HepG2 (cell line): ENCODE measurements at regions of chr12 and their contacts with region 1.

Region 1: GRCh38 chr12:98424726-98425401 is 90.5 kb upstream of the TMPO start:
- DNase-seq: peak; percentile 46
- ATAC-seq: peak; percentile 86
- H3K4me3 ChIP-seq: peak overlapping the region in 1 of 3 experiments; percentile 6; a peak in 1 of 6 replicates
- H3K27ac ChIP-seq: no peak overlapping the region
- H3K4me1 ChIP-seq: peaks cover 18% of the 10 kb centered on the region; the same call in 1 of the 2 replicates
- H3K27me3 ChIP-seq: 0 out of 5 replicates have a peak, but pooled peaks cover 0 to 1% of the 10 kb centered on the region in 2 experiments
- CTCF ChIP-seq: peak; percentile 74
- EP300 ChIP-seq: no peak
- POLR2A ChIP-seq: no peak
- RAD21 ChIP-seq: peak; percentile 29; the same call in 1 of the 2 replicates

Region 2: DNA sequence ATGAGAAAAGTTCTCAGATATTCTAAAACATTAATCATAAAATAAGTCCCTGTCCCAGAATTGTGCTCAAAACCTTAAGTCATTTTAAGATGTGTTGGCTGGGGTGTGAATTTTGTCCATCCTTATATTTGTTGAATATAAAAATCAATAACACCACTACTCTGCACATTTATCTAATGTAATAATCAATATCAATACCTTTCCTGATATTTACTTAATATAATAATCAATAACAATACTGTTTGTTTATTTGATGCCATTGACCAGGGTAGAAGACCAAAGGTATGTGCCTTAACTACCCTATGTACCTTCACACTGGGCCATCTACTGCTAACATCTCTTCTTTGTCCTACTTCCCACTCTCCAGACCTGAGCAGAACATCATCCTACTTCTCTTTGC is 141.5 kb before region 1 on chr12:
- CTCF ChIA-PET with region 1: no interaction called
- POLR2A ChIA-PET with region 1: no interaction called
- in situ Hi-C with region 1: no loop called
- intact Hi-C with region 1: no loop called
- DNase-seq: no peak
- ATAC-seq: no peak
- H3K4me3 ChIP-seq: no peak overlapping the region
- H3K27ac ChIP-seq: no peak overlapping the region
- H3K4me1 ChIP-seq: no peaks in the 10 kb centered on the region
- H3K27me3 ChIP-seq: no peaks in the 10 kb centered on the region
- CTCF ChIP-seq: no peak
- EP300 ChIP-seq: no peak
- POLR2A ChIP-seq: no peak
- RAD21 ChIP-seq: no peak

Region 3: GRCh38 chr12:98490501-98491453 is 65.9 kb after region 1 on chr12:
- CTCF ChIA-PET with region 1: no interaction called
- POLR2A ChIA-PET with region 1: no interaction called
- in situ Hi-C with region 1: no loop called
- intact Hi-C with region 1: loop called (anchors 2 kb)
- DNase-seq: peak; percentile 90
- ATAC-seq: peak; percentile 87
- H3K4me3 ChIP-seq: peak overlapping the region; percentile 31 to 60 (median 34); a peak in 5 of 6 replicates
- H3K27ac ChIP-seq: peak overlapping the region; percentile 76
- H3K4me1 ChIP-seq: peaks cover 56% of the 10 kb centered on the region
- H3K27me3 ChIP-seq: no peaks in the 10 kb centered on the region
- CTCF ChIP-seq: peak; percentile 93
- EP300 ChIP-seq: peak in 1 of 2 experiments; percentile 48; a peak in 2 of 4 replicates
- POLR2A ChIP-seq: peak; percentile 54; a peak in 1 of 4 replicates
- RAD21 ChIP-seq: peak; percentile 78

Region 4: GRCh38 chr12:98503592-98504367 is 78.9 kb after region 1 on chr12:
- CTCF ChIA-PET with region 1: no interaction called
- POLR2A ChIA-PET with region 1: no interaction called
- in situ Hi-C with region 1: no loop called
- intact Hi-C with region 1: loop called (anchors 5 kb)
- DNase-seq: peak; percentile 84
- ATAC-seq: peak; percentile 58
- H3K4me3 ChIP-seq: peak overlapping the region; percentile 72 to 77 (median 77)
- H3K27ac ChIP-seq: peak overlapping the region; percentile 99
- H3K4me1 ChIP-seq: peaks cover 39% of the 10 kb centered on the region
- H3K27me3 ChIP-seq: no peaks in the 10 kb centered on the region; a peak in 1 of 5 replicates
- CTCF ChIP-seq: peak; percentile 38
- EP300 ChIP-seq: peak in 1 of 2 experiments; percentile 25; a peak in 3 of 4 replicates
- POLR2A ChIP-seq: peak; percentile 65 to 74
- RAD21 ChIP-seq: peak; percentile 4; the same call in 1 of the 2 replicates

Region 5: GRCh38 chr12:98516184-98516873 is 91.5 kb after region 1 on chr12:
- CTCF ChIA-PET with region 1: interaction called, 11 read pairs
- POLR2A ChIA-PET with region 1: no interaction called
- in situ Hi-C with region 1: loop called (anchors 5 kb)
- intact Hi-C with region 1: loop called (anchors 1 kb)
- DNase-seq: peak; percentile 88
- ATAC-seq: peak; percentile 52
- H3K4me3 ChIP-seq: peak overlapping the region; percentile 82 to 94 (median 84)
- H3K27ac ChIP-seq: peak overlapping the region; percentile 99
- H3K4me1 ChIP-seq: peaks cover 41% of the 10 kb centered on the region
- H3K27me3 ChIP-seq: no peaks in the 10 kb centered on the region; a peak in 1 of 5 replicates
- CTCF ChIP-seq: peak; percentile 69
- EP300 ChIP-seq: no peak; a peak in 1 of 4 replicates
- POLR2A ChIP-seq: peak; percentile 17 to 45; a peak in 1 of 4 replicates
- RAD21 ChIP-seq: peak; percentile 58

Region 6: GRCh38 chr12:98532681-98533304 is 107.9 kb after region 1 on chr12:
- CTCF ChIA-PET with region 1: interaction called, 3 read pairs
- POLR2A ChIA-PET with region 1: no interaction called
- in situ Hi-C with region 1: no loop called
- intact Hi-C with region 1: loop called (anchors 2 kb)
- DNase-seq: peak; percentile 59
- ATAC-seq: peak; percentile 81
- H3K4me3 ChIP-seq: no peak overlapping the region
- H3K27ac ChIP-seq: no peak overlapping the region
- H3K4me1 ChIP-seq: peaks cover 17% of the 10 kb centered on the region
- H3K27me3 ChIP-seq: no peaks in the 10 kb centered on the region
- CTCF ChIP-seq: peak; percentile 45
- EP300 ChIP-seq: no peak
- POLR2A ChIP-seq: no peak
- RAD21 ChIP-seq: peak; percentile 18; the same call in 1 of the 2 replicates

Region 7: GRCh38 chr12:98653866-98654493 is 229.1 kb after region 1 on chr12:
- CTCF ChIA-PET with region 1: interaction called, 8 read pairs
- POLR2A ChIA-PET with region 1: no interaction called
- in situ Hi-C with region 1: loop called (anchors 10 kb)
- intact Hi-C with region 1: loop called (anchors 1 kb)
- DNase-seq: peak; percentile 68
- ATAC-seq: peak; percentile 49; the same call in 2 of the 3 replicates
- H3K4me3 ChIP-seq: no peak overlapping the region
- H3K27ac ChIP-seq: no peak overlapping the region
- H3K4me1 ChIP-seq: no peaks in the 10 kb centered on the region
- H3K27me3 ChIP-seq: no peaks in the 10 kb centered on the region
- CTCF ChIP-seq: peak; percentile 65
- EP300 ChIP-seq: no peak
- POLR2A ChIP-seq: no peak
- RAD21 ChIP-seq: peak; percentile 68

Region 8: DNA sequence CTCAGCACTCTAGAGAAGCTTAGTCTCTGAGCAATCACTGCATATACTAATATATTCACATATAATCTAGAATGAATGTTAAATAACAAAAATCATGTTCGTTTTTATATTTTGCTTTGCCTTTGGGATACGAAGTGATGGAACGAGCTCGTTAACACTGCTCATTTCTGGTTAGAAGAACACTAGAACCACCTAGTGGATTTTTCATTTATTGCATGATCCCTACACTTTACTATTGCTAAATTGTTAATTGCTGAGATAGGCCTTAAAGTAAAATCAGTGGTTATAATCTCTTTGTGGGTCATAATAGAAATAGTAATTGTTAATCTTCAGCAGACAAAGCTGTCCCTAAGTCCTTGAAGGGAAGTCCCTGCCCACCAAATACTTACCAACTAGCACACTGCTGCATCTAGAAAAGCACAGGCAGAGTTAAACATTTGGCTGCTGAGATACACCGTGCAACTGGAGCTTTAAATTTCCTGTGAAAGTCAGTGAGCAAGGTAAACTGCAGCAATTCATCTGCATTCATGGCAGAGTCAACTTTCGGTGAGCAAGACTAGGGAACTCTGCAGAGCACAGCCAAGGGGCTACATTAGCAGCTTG is 573.9 kb after region 1 on chr12:
- CTCF ChIA-PET with region 1: interaction called, 4 read pairs
- POLR2A ChIA-PET with region 1: no interaction called
- in situ Hi-C with region 1: no loop called
- intact Hi-C with region 1: loop called (anchors 10 kb)
- DNase-seq: peak; percentile 21
- ATAC-seq: peak; percentile 89
- H3K4me3 ChIP-seq: no peak overlapping the region
- H3K27ac ChIP-seq: no peak overlapping the region
- H3K4me1 ChIP-seq: no peaks in the 10 kb centered on the region
- H3K27me3 ChIP-seq: no peaks in the 10 kb centered on the region
- CTCF ChIP-seq: peak; percentile 68
- EP300 ChIP-seq: no peak
- POLR2A ChIP-seq: no peak
- RAD21 ChIP-seq: no peak; the same call in 1 of the 2 replicates